ENCODE measurements at regions of chr5 and their contacts with region 1.

Region 1: GRCh38 chr5:149528281-149529060 is 22.8 kb downstream of the CSNK1A1 start:
- DNase-seq: no peak
- H3K4me3 Mint-ChIP-seq: no peak overlapping the region
- H3K27ac Mint-ChIP-seq: peak overlapping the region; percentile 18
- H3K4me1 Mint-ChIP-seq: peaks cover 56% of the 10 kb centered on the region
- H3K27me3 Mint-ChIP-seq: no peaks in the 10 kb centered on the region

Region 2: DNA sequence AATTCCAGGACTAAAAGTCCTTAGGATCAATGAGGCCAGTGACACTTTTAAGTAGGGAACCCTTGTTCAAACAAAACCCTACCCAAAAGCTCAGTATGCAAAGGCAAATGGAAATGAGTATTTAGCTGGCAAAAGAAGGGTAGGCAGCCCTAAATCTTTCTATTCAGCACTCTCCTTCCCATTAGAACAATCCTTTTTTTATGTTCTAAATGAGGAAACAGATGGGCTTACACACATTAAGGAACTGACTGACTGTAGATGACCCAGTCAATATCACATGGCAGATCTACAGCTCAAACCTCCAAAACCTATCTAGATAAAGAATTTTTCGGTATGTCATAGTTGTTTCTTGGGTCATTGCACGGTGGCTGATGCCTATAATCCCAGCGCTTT is 15.6 kb after region 1 on chr5:
- intact Hi-C with region 1: loop called (anchors 2 kb)
- DNase-seq: no peak
- H3K4me3 Mint-ChIP-seq: no peak overlapping the region
- H3K27ac Mint-ChIP-seq: peak overlapping the region; percentile 38
- H3K4me1 Mint-ChIP-seq: peaks cover 41% of the 10 kb centered on the region
- H3K27me3 Mint-ChIP-seq: no peaks in the 10 kb centered on the region